Tibial artery (tissue), 4 donors: ENCODE measurements at regions of chr11 and their contacts with region 1.

Region 1: DNA sequence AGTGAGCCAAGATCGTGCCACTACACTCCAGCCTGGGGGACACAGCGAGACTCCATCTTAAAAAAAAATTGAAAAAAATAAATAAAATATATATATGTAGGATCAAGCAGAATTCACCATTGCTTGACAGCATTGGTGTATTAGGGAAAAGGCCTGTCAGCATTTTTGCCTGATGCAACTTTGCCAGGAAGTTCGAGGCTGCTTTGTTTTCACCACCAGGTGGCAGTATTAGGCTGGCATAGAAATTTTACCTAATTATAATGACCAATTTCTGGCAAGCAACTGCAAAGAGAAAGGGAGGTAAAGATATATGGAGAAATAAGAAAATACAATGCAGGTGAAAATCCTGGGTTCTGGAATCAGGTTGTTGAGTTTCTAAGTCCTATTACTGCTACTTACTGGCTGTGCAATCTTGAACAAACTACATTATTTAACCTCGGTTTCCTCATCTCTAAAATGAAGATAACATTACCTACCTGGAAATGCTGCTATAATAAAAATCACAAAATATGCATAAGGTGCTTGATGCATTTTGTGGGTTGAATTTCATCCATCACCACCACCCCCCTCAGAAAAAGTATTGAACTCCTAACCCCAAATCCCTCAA is 24.7 kb downstream of the LAYN start:
- DNase-seq: peak; percentile 56 to 77
- H3K4me3 ChIP-seq: no peak overlapping the region
- H3K27ac ChIP-seq: no peak overlapping the region
- H3K4me1 ChIP-seq: peaks cover 0 to 9% (median 0%) of the 10 kb centered on the region in 4 donors
- H3K27me3 ChIP-seq: no peaks in the 10 kb centered on the region
- CTCF ChIP-seq: peak; percentile 77 to 85

Region 2: GRCh38 chr11:111841370-111842053 is 276.3 kb after region 1 on chr11:
- intact Hi-C with region 1: loop called (anchors 5 kb)
- DNase-seq: peak; percentile 91
- H3K4me3 ChIP-seq: no peak overlapping the region
- H3K27ac ChIP-seq: peak overlapping the region in 1 of 2 donors; percentile 19
- H3K4me1 ChIP-seq: peaks cover 0 to 11% (median 0%) of the 10 kb centered on the region in 4 donors
- H3K27me3 ChIP-seq: no peaks in the 10 kb centered on the region
- CTCF ChIP-seq: peak; percentile 81 to 88